ENCODE measurements at regions of chr18 and their contacts with region 1.

Region 1: DNA sequence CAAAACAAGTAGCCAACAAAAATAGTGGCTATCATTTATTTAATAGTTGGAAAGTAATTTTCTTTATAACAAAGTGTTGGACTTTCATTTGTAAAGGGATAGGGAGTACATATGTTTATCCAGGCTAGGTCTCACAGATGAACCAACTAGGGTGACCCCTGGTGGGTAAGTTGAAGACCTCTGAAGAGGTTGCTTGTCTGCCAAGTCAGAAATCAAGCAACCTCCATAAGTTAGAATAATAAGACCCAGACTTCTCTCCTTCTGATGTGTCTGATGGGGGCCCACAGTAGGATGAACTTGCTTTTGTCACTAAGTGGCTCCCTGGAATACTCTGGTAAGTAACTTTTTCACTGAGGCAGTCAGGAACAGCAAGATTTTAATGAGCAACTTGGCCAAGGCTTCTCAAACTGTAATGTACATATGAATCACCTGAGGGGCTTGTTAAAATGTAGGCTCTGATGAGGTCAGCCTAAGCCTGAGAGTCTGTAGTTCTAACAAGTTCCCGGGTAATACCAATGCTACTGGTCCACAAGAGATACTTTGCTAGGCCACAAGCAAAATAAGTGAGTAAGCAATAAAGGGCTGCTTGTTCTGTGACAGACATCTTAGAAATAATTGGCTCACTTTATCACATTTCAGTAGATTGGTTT is 319.6 kb downstream of the PIK3C3 start:
- DNase-seq: peak; percentile 62
- ATAC-seq: peak; percentile 86
- H3K4me3 ChIP-seq: no peak overlapping the region
- H3K27ac ChIP-seq: no peak overlapping the region
- H3K4me1 ChIP-seq: no peaks in the 10 kb centered on the region
- H3K27me3 ChIP-seq: no peaks in the 10 kb centered on the region
- CTCF ChIP-seq: peak; percentile 56
- EP300 ChIP-seq: no peak
- POLR2A ChIP-seq: no peak
- RAD21 ChIP-seq: 0 out of 2 replicates have a peak, but pooled peaks have one; percentile 37

Region 2: DNA sequence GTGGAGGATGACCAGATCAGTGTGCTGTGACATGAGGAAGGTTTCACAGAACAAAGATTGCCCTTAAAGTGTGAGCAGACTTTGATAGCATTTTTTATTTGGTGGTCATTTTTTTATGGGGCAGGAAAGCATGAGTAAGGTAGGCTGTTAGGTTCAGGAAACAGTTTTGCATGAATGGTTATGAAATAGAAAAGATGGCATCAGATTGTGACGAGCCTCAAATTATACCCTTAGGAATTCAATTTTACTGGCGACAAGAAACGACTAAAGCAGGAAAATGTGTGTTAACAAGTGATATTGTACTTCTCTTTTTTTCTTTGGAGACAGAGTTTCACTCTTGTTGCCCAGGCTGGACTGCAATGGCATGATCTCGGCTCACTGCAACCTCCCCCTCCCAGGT is 274.9 kb before region 1 on chr18:
- CTCF ChIA-PET with region 1: no interaction called
- POLR2A ChIA-PET with region 1: no interaction called
- in situ Hi-C with region 1: no loop called
- intact Hi-C with region 1: no loop called
- DNase-seq: no peak
- ATAC-seq: no peak
- H3K4me3 ChIP-seq: no peak overlapping the region
- H3K27ac ChIP-seq: no peak overlapping the region
- H3K4me1 ChIP-seq: no peaks in the 10 kb centered on the region
- H3K27me3 ChIP-seq: no peaks in the 10 kb centered on the region
- CTCF ChIP-seq: no peak
- EP300 ChIP-seq: no peak
- POLR2A ChIP-seq: no peak
- RAD21 ChIP-seq: no peak

Region 3: DNA sequence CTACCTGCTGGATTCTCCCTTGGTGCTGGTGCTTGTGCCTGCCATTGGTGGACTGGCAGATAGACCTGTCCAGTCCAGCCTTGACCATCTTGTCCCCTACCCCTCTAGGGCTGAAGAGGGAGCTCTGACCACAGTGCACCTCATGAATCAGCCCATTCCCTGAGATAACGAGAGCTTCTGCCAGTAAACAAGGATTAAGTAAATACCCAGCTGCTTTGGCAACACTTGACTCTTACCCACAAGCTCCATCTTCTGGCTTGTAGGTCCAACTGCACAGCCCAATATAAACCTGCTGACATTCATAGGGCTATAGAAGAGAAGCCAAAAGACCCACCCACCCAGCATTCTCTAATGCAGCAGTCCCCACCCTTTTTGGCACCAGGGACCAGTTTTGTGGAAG is 133.2 kb before region 1 on chr18:
- CTCF ChIA-PET with region 1: interaction called, 3 read pairs
- POLR2A ChIA-PET with region 1: no interaction called
- in situ Hi-C with region 1: no loop called
- intact Hi-C with region 1: loop called (anchors 1 kb)
- DNase-seq: peak; percentile 53
- ATAC-seq: peak; percentile 97
- H3K4me3 ChIP-seq: no peak overlapping the region
- H3K27ac ChIP-seq: no peak overlapping the region
- H3K4me1 ChIP-seq: no peaks in the 10 kb centered on the region
- H3K27me3 ChIP-seq: no peaks in the 10 kb centered on the region
- CTCF ChIP-seq: peak; percentile 50
- EP300 ChIP-seq: no peak
- POLR2A ChIP-seq: no peak
- RAD21 ChIP-seq: peak; percentile 44; the same call in 1 of the 2 replicates

Region 4: DNA sequence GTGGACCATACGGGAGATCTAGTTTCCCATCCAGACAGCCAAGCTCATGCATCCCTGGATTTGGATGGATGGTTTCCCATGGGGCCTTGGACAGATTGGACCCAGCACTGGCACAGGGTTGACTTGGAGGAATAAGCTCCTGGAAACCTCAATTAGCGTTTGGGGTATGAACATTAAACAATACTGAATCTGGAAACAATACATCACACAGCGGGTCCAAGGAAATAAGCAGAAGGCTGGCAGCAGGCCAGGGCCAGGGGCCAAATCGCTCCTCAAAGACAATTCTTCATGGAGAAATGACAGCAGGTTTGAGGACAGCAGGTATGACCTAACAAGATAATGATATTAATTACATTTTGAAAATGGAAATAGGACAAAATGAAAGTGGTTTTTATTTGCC is 300.3 kb after region 1 on chr18:
- CTCF ChIA-PET with region 1: no interaction called
- POLR2A ChIA-PET with region 1: no interaction called
- in situ Hi-C with region 1: no loop called
- intact Hi-C with region 1: no loop called
- DNase-seq: no peak
- ATAC-seq: no peak
- H3K4me3 ChIP-seq: no peak overlapping the region
- H3K27ac ChIP-seq: no peak overlapping the region
- H3K4me1 ChIP-seq: no peaks in the 10 kb centered on the region
- H3K27me3 ChIP-seq: no peaks in the 10 kb centered on the region
- CTCF ChIP-seq: no peak
- EP300 ChIP-seq: no peak
- POLR2A ChIP-seq: no peak
- RAD21 ChIP-seq: no peak